CD4-positive, alpha-beta T cell (primary cell): ENCODE measurements at regions of chr6 and their contacts with region 1.

Region 1: GRCh38 chr6:27078734-27079357 is 168.7 kb upstream of the PRSS16 start:
- DNase-seq: peak in 11 of 14 experiments; percentile 3 to 69 (median 15)
- ATAC-seq: peak; percentile 58
- H3K4me3 ChIP-seq: peak overlapping the region; percentile 37
- H3K4me3 Mint-ChIP-seq: peak overlapping the region; percentile 20
- H3K27ac ChIP-seq: no peak overlapping the region
- H3K27ac Mint-ChIP-seq: no peak overlapping the region
- H3K4me1 ChIP-seq: peaks cover 5% of the 10 kb centered on the region
- H3K4me1 Mint-ChIP-seq: peaks cover 4% of the 10 kb centered on the region
- H3K27me3 ChIP-seq: peaks cover 9 to 57% of the 10 kb centered on the region in 2 experiments
- H3K27me3 Mint-ChIP-seq: peaks cover 87% of the 10 kb centered on the region
- CTCF ChIP-seq: peak; percentile 51

Region 2: DNA sequence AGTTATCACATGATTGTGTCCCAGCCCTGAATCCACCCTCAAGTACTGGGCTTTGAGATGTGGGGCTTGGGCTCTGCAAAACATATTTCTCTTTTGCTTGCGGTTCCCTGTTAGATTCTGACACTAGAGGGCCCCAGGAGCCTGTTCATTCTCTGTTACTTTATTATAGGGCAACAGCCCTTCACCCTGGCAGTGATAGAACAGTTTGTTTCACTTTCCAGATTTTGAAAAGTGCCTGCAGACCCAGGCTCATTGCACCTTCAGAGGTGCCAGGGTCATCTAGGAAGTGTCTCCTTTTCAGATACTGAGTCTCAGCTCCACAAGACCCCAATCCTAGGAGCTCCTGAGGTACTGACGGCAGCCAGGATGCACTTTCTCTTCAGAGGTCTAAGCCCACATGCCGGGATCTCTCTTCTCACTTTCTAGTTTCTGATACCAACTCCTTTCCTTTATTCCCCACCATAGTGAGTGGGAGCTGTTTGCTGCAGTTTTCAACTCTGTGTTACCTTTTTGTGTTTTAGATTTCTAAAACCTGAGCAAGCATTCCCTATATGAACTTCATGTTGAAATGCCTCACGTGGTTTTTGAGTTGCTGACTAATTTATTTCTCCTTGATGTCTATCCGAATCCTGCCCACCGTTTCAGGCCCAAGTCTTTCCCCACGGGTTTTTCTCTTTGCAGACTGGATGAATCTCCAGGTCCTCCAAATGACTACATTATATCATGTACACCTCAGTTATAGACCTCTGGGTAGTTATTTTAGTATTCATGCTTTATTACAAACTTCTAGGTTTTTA is 471.2 kb before region 1 on chr6:
- CTCF ChIA-PET with region 1: no interaction called
- POLR2A ChIA-PET with region 1: no interaction called
- intact Hi-C with region 1: loop called (anchors 1 to 2 kb)
- DNase-seq: peak; percentile 21 to 83 (median 49)
- ATAC-seq: peak; percentile 99
- H3K4me3 ChIP-seq: peak overlapping the region; percentile 42
- H3K4me3 Mint-ChIP-seq: peak overlapping the region; percentile 75
- H3K27ac ChIP-seq: no peak overlapping the region
- H3K27ac Mint-ChIP-seq: peak overlapping the region; percentile 21
- H3K4me1 ChIP-seq: peaks cover 11% of the 10 kb centered on the region
- H3K4me1 Mint-ChIP-seq: peaks cover 11% of the 10 kb centered on the region
- H3K27me3 ChIP-seq: peaks cover 0 to 2% of the 10 kb centered on the region in 2 experiments
- H3K27me3 Mint-ChIP-seq: peaks cover 9% of the 10 kb centered on the region
- CTCF ChIP-seq: peak; percentile 79

Region 3: GRCh38 chr6:27177485-27178406 is 98.9 kb after region 1 on chr6:
- CTCF ChIA-PET with region 1: no interaction called
- POLR2A ChIA-PET with region 1: no interaction called
- intact Hi-C with region 1: no loop called
- DNase-seq: peak; percentile 44 to 90 (median 64)
- ATAC-seq: peak; percentile 64
- H3K4me3 ChIP-seq: peak overlapping the region; percentile 89
- H3K4me3 Mint-ChIP-seq: peak overlapping the region; percentile 99
- H3K27ac ChIP-seq: peak overlapping the region; percentile 27 to 63
- H3K27ac Mint-ChIP-seq: peak overlapping the region; percentile 100
- H3K4me1 ChIP-seq: peaks cover 21% of the 10 kb centered on the region
- H3K4me1 Mint-ChIP-seq: peaks cover 24% of the 10 kb centered on the region
- H3K27me3 ChIP-seq: no peaks in the 10 kb centered on the region
- H3K27me3 Mint-ChIP-seq: peaks cover 24% of the 10 kb centered on the region
- CTCF ChIP-seq: peak; percentile 54

Region 4: DNA sequence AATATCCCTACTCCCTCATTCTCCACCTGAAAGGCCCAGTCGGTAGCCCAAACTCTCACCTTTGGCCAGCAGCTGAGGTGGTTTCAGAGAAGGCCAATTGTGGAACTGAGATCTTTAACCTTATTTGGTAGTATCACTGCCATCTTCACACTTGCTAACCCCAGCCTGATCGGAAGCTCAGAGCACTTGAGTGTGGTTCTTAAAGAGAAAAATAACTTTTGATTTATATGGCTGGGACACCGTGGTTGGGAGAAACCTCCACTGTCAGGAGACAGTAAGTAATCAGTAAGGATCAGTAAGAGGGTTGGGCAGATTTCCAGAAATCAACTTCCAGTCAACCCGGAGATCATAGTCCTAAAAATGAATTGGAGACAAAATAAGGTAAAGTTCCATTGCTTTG is 145.9 kb after region 1 on chr6:
- CTCF ChIA-PET with region 1: no interaction called
- POLR2A ChIA-PET with region 1: no interaction called
- intact Hi-C with region 1: no loop called
- DNase-seq: no peak
- ATAC-seq: no peak
- H3K4me3 ChIP-seq: no peak overlapping the region
- H3K4me3 Mint-ChIP-seq: no peak overlapping the region
- H3K27ac ChIP-seq: no peak overlapping the region
- H3K27ac Mint-ChIP-seq: no peak overlapping the region
- H3K4me1 ChIP-seq: no peaks in the 10 kb centered on the region
- H3K4me1 Mint-ChIP-seq: no peaks in the 10 kb centered on the region
- H3K27me3 ChIP-seq: peaks cover 26 to 58% of the 10 kb centered on the region in 2 experiments
- H3K27me3 Mint-ChIP-seq: peaks cover 76% of the 10 kb centered on the region
- CTCF ChIP-seq: no peak